Vagina (tissue), 2 donors: ENCODE measurements at regions of chr2 and their contacts with region 1.

Region 1: GRCh38 chr2:237421542-237422116 is 7.7 kb upstream of the COL6A3 start:
- DNase-seq: peak in 1 of 2 donors; percentile 91
- H3K4me3 ChIP-seq: no peak overlapping the region
- H3K27ac ChIP-seq: peak overlapping the region; percentile 89
- H3K4me1 ChIP-seq: peaks cover 10% of the 10 kb centered on the region
- H3K27me3 ChIP-seq: no peaks in the 10 kb centered on the region
- CTCF ChIP-seq: peak; percentile 63 to 79 (median 66)
- POLR2A ChIP-seq: no peak

Region 2: DNA sequence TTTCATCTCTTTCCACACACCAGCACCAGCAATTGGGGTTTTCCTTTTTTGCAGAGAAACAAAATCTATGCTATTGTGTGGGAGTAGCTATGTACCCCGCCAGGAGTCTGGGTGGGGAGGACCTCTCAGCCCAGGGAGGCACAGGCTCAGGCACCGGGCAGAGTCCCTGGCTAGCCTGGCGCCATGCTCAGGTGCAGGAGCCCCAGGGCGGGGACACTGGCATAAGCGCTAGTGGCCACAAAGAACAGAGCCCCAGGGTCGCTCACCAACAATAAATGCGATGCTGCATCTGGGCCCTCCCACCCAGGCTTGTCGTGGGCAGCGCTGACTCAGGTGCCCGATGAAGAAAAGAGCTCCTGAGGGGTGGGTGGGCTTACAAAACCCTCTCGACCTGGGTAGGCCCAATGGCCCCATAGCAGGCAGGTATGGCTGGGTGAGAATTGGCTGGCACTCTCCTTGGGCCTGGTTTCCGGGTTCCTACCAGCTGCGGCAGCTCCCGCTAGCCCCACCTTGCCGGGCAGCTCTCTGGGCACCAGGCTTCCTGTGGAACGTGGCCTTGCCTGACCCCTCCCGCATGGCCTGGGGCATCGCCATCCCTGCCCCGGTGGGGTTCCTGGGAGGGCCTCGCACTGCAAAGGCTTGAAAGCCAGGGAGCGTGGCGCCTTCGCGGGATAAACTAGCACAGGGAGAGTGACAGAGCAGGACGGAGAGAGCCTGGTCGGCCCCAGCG is 24.1 kb after region 1 on chr2:
- intact Hi-C with region 1: loop called (anchors 1 kb)
- DNase-seq: no peak
- H3K4me3 ChIP-seq: no peak overlapping the region
- H3K27ac ChIP-seq: peak overlapping the region; percentile 92
- H3K4me1 ChIP-seq: peaks cover 40% of the 10 kb centered on the region
- H3K27me3 ChIP-seq: no peaks in the 10 kb centered on the region
- CTCF ChIP-seq: no peak
- POLR2A ChIP-seq: no peak